IMR-90 (cell line): ENCODE measurements at regions of chr17 and their contacts with region 1.

Region 1: DNA sequence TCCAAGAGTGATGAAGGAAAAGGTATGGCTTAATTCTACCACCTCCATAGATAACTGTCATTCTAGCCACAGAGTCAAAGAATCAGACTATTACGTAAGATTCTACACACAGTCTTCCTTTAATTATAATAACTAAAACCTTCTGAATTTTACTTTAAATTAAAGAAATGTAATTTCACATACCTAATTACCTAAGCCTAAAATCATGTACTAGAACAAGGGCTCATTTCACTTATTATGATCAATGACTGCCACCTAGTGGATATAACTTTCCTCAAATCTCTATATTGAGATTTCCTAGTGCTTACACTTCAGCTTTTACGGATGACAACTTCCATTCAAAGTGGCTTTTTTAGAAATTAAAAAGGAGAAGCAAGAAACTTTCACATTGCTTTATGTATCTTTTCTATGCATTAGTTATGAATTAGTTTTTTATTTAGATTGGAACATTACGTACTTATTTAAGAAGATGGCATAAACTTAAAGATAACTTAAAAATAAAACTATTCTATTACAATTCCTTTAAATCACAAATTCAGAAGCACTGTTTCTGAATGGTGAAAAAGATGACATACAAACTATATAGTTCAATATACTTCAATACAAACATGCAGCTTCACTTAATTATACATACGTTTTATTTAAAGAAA is 18.2 kb upstream of the ABCA10 start:
- DNase-seq: peak; percentile 55
- ATAC-seq: peak; percentile 75
- H3K4me3 ChIP-seq: no peak overlapping the region
- H3K27ac ChIP-seq: no peak overlapping the region
- H3K4me1 ChIP-seq: no peaks in the 10 kb centered on the region
- H3K27me3 ChIP-seq: no peaks in the 10 kb centered on the region
- CTCF ChIP-seq: peak; percentile 62
- POLR2A ChIP-seq: no peak
- RAD21 ChIP-seq: peak; percentile 58

Region 2: DNA sequence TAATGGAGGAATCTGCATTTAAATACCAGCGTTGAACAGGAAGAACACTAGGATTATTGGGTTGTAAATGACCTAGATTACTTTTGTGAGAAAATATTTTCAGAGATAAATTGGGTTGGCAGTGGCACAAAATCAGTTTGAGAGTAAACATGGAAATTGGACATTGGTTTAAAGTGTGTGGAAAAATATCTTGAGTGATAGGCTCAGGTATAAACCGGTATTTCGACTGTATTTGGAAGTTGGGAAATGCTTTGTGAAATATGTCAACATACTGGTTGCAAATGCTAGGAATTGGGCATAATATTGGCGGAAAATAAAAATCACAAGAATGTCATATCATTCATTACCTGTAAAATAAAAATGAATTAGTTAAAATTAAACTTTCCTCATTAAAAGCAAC is 719.5 kb before region 1 on chr17:
- CTCF ChIA-PET with region 1: no interaction called
- POLR2A ChIA-PET with region 1: no interaction called
- dilution Hi-C with region 1: no loop called
- in situ Hi-C with region 1: loop called (anchors 10 kb)
- intact Hi-C with region 1: loop called (anchors 2 kb)
- DNase-seq: no peak
- ATAC-seq: no peak
- H3K4me3 ChIP-seq: no peak overlapping the region
- H3K27ac ChIP-seq: no peak overlapping the region
- H3K4me1 ChIP-seq: no peaks in the 10 kb centered on the region
- H3K27me3 ChIP-seq: no peaks in the 10 kb centered on the region
- CTCF ChIP-seq: no peak
- POLR2A ChIP-seq: no peak
- RAD21 ChIP-seq: no peak

Region 3: GRCh38 chr17:68539548-68540467 is 707.0 kb before region 1 on chr17:
- CTCF ChIA-PET with region 1: no interaction called
- POLR2A ChIA-PET with region 1: no interaction called
- dilution Hi-C with region 1: no loop called
- in situ Hi-C with region 1: loop called (anchors 10 kb)
- intact Hi-C with region 1: no loop called
- DNase-seq: no peak
- ATAC-seq: no peak
- H3K4me3 ChIP-seq: no peak overlapping the region
- H3K27ac ChIP-seq: no peak overlapping the region
- H3K4me1 ChIP-seq: no peaks in the 10 kb centered on the region
- H3K27me3 ChIP-seq: no peaks in the 10 kb centered on the region
- CTCF ChIP-seq: no peak
- POLR2A ChIP-seq: no peak
- RAD21 ChIP-seq: no peak

Region 4: DNA sequence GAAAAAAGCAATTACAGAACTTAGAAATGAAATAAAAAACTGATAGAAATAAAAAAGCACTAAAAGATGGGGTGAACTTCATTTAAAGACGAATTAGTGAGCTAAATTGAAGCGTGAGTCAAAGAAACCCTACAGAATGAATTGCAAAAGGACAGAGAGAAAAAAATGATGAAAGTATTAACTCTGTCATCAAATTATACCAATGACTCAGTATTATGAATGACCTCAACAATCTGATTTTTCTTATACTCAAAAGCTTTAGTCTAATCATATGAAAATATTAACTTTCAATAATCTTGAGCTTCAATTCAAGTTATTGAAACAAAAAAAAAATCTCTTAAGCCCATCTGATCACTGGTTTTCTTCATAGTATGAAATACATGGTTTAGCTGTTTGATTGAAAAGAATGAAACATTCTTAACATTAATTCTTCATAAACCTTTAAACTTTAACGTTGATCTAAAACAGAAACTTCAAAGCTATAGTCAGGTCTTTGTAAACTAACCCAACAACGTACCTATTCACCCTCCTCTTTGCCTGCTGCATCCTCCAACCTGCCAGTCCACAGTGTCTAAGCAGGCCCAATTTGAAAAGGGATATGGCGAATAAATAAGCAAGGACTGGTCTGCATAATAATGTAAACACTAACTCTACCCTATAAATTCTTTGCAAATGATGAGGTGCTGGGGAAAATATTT is 73.5 kb after region 1 on chr17:
- CTCF ChIA-PET with region 1: no interaction called
- POLR2A ChIA-PET with region 1: no interaction called
- dilution Hi-C with region 1: no loop called
- in situ Hi-C with region 1: no loop called
- intact Hi-C with region 1: no loop called
- DNase-seq: no peak
- ATAC-seq: no peak
- H3K4me3 ChIP-seq: no peak overlapping the region
- H3K27ac ChIP-seq: no peak overlapping the region
- H3K4me1 ChIP-seq: no peaks in the 10 kb centered on the region
- H3K27me3 ChIP-seq: no peaks in the 10 kb centered on the region; the same call in 1 of the 2 replicates
- CTCF ChIP-seq: no peak
- POLR2A ChIP-seq: no peak
- RAD21 ChIP-seq: no peak